ENCODE measurements at regions of chr5 and their contacts with region 1.

Region 1: DNA sequence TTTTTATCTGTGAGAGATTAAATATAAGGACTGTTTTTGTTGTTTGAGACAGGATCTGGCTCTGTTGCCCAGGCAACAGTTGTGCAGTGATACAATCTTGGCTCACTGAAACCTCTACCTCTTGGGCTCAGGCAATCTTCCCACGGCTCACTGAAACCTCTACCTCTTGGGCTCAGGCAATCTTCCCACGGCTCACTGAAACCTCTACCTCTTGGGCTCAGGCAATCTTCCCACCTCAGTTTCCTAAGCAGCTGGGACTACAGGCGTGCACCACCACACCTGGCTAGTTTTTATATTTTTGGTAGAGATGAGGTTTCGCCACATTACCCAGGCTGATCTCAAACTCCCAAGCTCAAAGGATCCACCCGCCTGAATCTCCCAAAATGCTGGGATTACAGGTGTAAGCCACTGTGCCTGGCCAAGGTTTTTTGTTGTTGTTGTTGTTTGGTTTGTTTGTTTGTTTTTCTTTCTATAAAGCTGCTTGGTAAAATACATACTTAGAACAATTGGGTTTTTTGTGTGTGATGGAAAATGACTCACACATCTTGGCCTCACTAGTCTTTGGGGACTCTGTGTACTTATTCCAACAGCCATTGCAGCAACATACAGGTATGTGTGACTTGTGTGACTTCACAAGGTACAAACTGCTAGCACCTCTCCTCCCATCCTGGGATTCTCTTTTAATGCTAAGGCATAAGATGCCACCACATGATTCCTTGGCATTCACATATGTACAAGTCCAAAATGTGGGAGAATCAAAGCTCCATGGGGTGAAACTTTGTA is 36.5 kb upstream of the RASA1 start:
- DNase-seq: peak; percentile 83
- ATAC-seq: peak; percentile 90
- H3K4me3 ChIP-seq: no peak overlapping the region
- H3K27ac ChIP-seq: peak overlapping the region; percentile 99
- H3K4me1 ChIP-seq: peaks cover 21% of the 10 kb centered on the region
- H3K27me3 ChIP-seq: no peaks in the 10 kb centered on the region
- CTCF ChIP-seq: no peak
- EP300 ChIP-seq: peak in 1 of 2 experiments; percentile 65; a peak in 1 of 4 replicates
- POLR2A ChIP-seq: no peak
- RAD21 ChIP-seq: peak; percentile 37

Region 2: GRCh38 chr5:87081511-87082372 is 149.5 kb before region 1 on chr5:
- CTCF ChIA-PET with region 1: interaction called, 3 read pairs
- POLR2A ChIA-PET with region 1: interaction called, 3 read pairs
- RAD21 ChIA-PET with region 1: interaction called, 3 read pairs
- SMC1A ChIA-PET with region 1: interaction called, 9 read pairs
- in situ Hi-C with region 1: no loop called
- intact Hi-C with region 1: loop called (anchors 2 kb)
- DNase-seq: peak; percentile 80
- ATAC-seq: peak; percentile 94
- H3K4me3 ChIP-seq: peak overlapping the region; percentile 13; the same call in 1 of the 2 replicates
- H3K27ac ChIP-seq: peak overlapping the region; percentile 90
- H3K4me1 ChIP-seq: peaks cover 15% of the 10 kb centered on the region
- H3K27me3 ChIP-seq: no peaks in the 10 kb centered on the region
- CTCF ChIP-seq: no peak
- EP300 ChIP-seq: peak; percentile 87 to 91
- POLR2A ChIP-seq: no peak
- RAD21 ChIP-seq: peak; percentile 36; the same call in 1 of the 2 replicates

Region 3: DNA sequence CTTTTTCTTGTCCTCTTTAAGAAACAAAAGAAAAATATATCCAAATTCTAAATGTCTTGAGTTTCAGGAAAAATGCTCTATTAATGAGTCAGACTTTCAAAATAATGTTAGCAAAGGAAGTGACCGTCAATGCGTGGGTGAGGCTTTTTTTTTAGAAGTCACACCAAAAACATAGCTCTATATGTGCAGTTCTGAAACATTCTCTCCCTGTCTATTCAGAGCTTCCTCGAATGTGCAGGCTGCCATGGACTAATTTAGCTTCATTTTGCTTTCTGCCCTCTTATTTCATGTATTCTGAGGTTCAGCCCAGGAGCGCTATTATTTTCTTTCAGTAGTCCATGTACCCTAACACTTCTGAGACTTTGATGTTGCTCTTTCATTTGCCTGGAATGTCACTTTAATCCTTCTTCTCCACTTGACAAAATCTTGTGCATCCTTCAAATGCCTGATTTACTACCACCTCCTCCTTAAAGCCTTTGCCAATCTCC is 36.1 kb before region 1 on chr5:
- CTCF ChIA-PET with region 1: interaction called, 8 read pairs
- POLR2A ChIA-PET with region 1: interaction called, 6 read pairs
- RAD21 ChIA-PET with region 1: interaction called, 15 read pairs
- SMC1A ChIA-PET with region 1: interaction called, 43 read pairs
- in situ Hi-C with region 1: no loop called
- intact Hi-C with region 1: no loop called
- DNase-seq: peak; percentile 48
- ATAC-seq: peak; percentile 73
- H3K4me3 ChIP-seq: no peak overlapping the region
- H3K27ac ChIP-seq: peak overlapping the region; percentile 63
- H3K4me1 ChIP-seq: peaks cover 35% of the 10 kb centered on the region
- H3K27me3 ChIP-seq: no peaks in the 10 kb centered on the region
- CTCF ChIP-seq: no peak
- EP300 ChIP-seq: 0 out of 4 replicates have a peak, but pooled peaks of 1 of the 2 experiments have one; percentile 46
- POLR2A ChIP-seq: no peak
- RAD21 ChIP-seq: peak; percentile 14; the same call in 1 of the 2 replicates

Region 4: DNA sequence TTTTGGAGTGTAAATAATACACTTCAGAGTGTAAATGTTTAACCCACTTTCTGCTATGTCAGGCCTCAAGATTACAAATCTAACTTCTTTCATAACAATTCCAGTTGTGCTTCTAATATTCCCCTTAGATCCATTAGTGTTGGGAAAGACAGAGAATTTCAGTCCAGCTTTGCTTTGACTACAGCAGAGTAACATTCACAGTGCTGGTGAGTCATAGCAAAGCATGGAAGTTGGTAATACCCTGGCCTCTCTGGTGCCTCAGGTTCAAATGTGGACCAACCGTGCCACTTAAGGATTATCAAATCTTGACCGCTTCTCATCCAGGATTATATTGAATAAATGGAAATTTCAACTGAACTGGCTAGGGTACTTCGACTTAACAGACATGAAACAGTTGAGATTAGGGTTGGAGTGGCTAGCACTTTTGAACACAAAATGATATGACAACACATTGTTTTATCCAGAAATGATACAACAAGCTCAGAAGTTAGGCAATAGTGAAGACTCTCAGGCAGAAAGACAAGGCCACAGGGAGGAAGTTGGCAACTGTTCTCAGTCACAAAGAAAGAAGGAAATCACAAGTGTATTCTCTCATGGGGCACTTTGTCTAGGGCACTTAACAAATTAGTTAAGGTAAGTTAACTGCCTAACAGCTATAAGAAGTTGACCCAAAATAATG is 12.1 kb after region 1 on chr5:
- CTCF ChIA-PET with region 1: interaction called, 8 read pairs
- POLR2A ChIA-PET with region 1: interaction called, 6 read pairs
- RAD21 ChIA-PET with region 1: interaction called, 3 read pairs
- SMC1A ChIA-PET with region 1: interaction called, 21 read pairs
- in situ Hi-C with region 1: no loop called
- intact Hi-C with region 1: no loop called
- DNase-seq: no peak
- ATAC-seq: peak; percentile 62
- H3K4me3 ChIP-seq: no peak overlapping the region
- H3K27ac ChIP-seq: no peak overlapping the region
- H3K4me1 ChIP-seq: no peaks in the 10 kb centered on the region; the same call in 1 of the 2 replicates
- H3K27me3 ChIP-seq: no peaks in the 10 kb centered on the region
- CTCF ChIP-seq: no peak
- EP300 ChIP-seq: no peak
- POLR2A ChIP-seq: no peak
- RAD21 ChIP-seq: no peak

Region 5: GRCh38 chr5:87267574-87268125 is 36.4 kb after region 1 on chr5 and contains the start of gene RASA1:
- CTCF ChIA-PET with region 1: interaction called, 3 read pairs
- POLR2A ChIA-PET with region 1: interaction called, 8 read pairs
- RAD21 ChIA-PET with region 1: interaction called, 26 read pairs
- SMC1A ChIA-PET with region 1: interaction called, 39 read pairs
- in situ Hi-C with region 1: no loop called
- intact Hi-C with region 1: loop called (anchors 1 kb)
- DNase-seq: peak; percentile 76
- ATAC-seq: peak; percentile 74
- H3K4me3 ChIP-seq: peak within 1 kb of the TSS; percentile 98
- H3K27ac ChIP-seq: peak within 1 kb of the TSS; percentile 94
- H3K4me1 ChIP-seq: no peaks in the 10 kb centered on the region
- H3K27me3 ChIP-seq: no peaks in the 10 kb centered on the region
- CTCF ChIP-seq: no peak
- EP300 ChIP-seq: no peak
- POLR2A ChIP-seq: peak; percentile 91
- RAD21 ChIP-seq: peak; percentile 30
- polyA plus RNA-seq, gene RASA1: 7.8 to 12.0 TPM

Region 6: GRCh38 chr5:87340716-87341115 is 109.5 kb after region 1 on chr5:
- CTCF ChIA-PET with region 1: interaction called, 3 read pairs
- POLR2A ChIA-PET with region 1: no interaction called
- RAD21 ChIA-PET with region 1: no interaction called
- SMC1A ChIA-PET with region 1: interaction called, 4 read pairs
- in situ Hi-C with region 1: no loop called
- intact Hi-C with region 1: loop called (anchors 1 kb)
- DNase-seq: peak; percentile 90
- ATAC-seq: peak; percentile 98
- H3K4me3 ChIP-seq: no peak overlapping the region
- H3K27ac ChIP-seq: peak overlapping the region; percentile 61
- H3K4me1 ChIP-seq: no peaks in the 10 kb centered on the region; the same call in 1 of the 2 replicates
- H3K27me3 ChIP-seq: no peaks in the 10 kb centered on the region
- CTCF ChIP-seq: no peak
- EP300 ChIP-seq: no peak
- POLR2A ChIP-seq: no peak
- RAD21 ChIP-seq: peak; percentile 11; the same call in 1 of the 2 replicates

Region 7: DNA sequence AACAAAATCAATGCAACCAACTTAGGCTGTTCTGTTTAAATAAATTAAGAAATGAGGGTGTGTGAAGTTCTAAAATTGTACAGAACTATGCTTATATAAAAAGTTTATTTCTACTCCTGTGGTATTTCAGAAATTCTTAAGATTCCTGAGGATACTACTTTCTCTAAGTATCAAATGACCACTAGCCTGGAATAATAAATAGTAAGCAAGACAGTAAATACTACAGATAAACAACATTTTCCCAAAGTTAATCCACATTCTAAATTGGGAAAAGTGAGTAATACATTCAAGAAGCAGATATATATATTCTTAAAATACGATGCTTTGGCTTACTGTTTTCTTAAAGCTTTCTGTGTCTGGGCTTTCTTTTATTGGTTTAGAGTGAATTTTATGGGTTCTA is 152.0 kb after region 1 on chr5:
- CTCF ChIA-PET with region 1: no interaction called
- POLR2A ChIA-PET with region 1: no interaction called
- RAD21 ChIA-PET with region 1: no interaction called
- SMC1A ChIA-PET with region 1: no interaction called
- in situ Hi-C with region 1: no loop called
- intact Hi-C with region 1: no loop called
- DNase-seq: no peak
- ATAC-seq: no peak
- H3K4me3 ChIP-seq: no peak overlapping the region
- H3K27ac ChIP-seq: no peak overlapping the region
- H3K4me1 ChIP-seq: no peaks in the 10 kb centered on the region
- H3K27me3 ChIP-seq: no peaks in the 10 kb centered on the region
- CTCF ChIP-seq: no peak
- EP300 ChIP-seq: no peak
- POLR2A ChIP-seq: no peak
- RAD21 ChIP-seq: no peak